Activated CD4-positive, alpha-beta T cell treated with anti-CD3 and anti-CD28 coated beads, Interleukin-2, amount 10 ng/mL, durations not matched to agents 24 days and 14 days (primary cell): ENCODE measurements at regions of chr11 and their contacts with region 1.

Region 1: GRCh38 chr11:46361283-46362155 is 14.3 kb downstream of the DGKZ start:
- DNase-seq: peak; percentile 89
- H3K4me3 Mint-ChIP-seq: peak overlapping the region; percentile 88
- H3K27ac Mint-ChIP-seq: peak overlapping the region; percentile 80
- H3K4me1 Mint-ChIP-seq: peaks cover 27% of the 10 kb centered on the region
- H3K27me3 Mint-ChIP-seq: no peaks in the 10 kb centered on the region

Region 2: DNA sequence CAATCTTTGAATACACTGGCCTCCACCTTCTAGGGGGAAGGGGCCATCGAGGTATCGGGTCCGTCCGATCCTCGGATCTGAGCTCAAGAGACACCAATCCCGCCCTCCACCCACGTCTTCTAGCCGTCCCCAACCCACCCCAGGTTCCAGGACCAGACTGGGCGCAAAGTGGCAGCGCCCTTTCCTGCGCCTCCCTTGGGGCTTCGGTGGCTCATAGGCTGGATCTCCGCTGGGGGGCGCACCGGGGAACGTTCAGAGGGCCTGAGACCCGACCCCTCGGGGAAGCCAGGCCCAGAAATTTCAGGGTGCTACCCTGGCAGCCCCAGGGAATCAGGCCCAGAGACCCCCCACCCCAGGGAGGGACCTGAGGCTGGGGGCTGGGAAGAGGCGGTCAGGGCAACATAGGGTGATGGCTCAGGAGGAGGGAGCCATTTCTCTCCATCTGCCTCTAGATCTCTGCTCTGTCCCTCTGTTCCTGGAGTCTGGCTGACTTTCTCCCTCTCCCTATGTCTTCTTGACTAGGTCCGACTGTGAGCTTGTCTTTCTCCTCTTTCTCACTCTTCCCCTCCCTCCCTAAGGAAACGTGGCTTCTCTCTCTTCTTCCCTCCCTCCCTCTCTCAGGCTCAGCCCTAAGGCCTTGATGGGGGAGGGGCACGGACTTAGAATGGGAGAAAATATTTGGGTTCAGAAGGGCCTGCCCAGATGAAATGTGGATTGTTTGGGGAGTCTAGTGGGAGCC is 83.0 kb before region 1 on chr11:
- intact Hi-C with region 1: no loop called
- DNase-seq: peak; percentile 68
- H3K4me3 Mint-ChIP-seq: no peak overlapping the region
- H3K27ac Mint-ChIP-seq: no peak overlapping the region
- H3K4me1 Mint-ChIP-seq: no peaks in the 10 kb centered on the region
- H3K27me3 Mint-ChIP-seq: peaks cover 58% of the 10 kb centered on the region

Region 3: GRCh38 chr11:46346886-46347636 is 14.5 kb before region 1 on chr11 and contains the start of gene DGKZ:
- intact Hi-C with region 1: loop called (anchors 1 kb)
- DNase-seq: peak; percentile 98
- H3K4me3 Mint-ChIP-seq: peak within 1 kb of the TSS; percentile 88
- H3K27ac Mint-ChIP-seq: peak within 1 kb of the TSS; percentile 91
- H3K4me1 Mint-ChIP-seq: peaks cover 73% of the 10 kb centered on the region
- H3K27me3 Mint-ChIP-seq: no peaks in the 10 kb centered on the region
- total RNA-seq, gene DGKZ: 87.4 and 94.7 TPM in 2 replicates

Region 4: DNA sequence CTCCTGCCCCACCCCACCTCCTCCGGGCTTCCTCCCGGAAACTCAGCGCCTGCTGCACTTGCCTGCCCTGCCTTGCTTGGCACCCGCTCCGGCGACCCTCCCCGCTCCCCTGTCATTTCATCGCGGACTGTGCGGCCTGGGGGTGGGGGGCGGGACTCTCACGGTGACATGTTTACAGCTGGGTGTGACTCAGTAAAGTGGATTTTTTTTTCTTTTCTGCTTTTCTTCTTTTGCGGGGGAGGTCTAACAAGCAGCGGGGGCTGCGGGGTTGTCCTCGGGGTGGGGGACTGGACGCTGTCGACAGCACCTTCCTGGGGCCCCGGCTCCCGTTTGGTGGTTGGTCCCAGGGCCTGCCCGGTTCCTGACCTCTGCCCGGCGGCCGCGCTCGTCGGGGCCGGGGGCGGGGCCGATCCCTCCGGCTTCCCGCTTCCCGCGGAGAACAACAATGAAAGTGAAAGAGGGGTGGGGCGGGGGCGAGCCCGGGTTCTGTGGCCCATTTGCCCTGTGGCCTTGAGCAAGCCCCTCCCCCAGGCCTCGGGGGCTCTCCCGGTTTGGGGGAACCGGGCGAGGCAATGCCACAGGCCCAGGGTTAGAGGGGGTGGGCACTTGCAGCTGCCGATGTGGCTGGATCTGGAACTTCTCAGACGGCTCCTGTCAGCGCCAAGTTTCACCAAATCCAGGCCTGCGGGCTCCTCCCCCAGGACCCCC is 19.0 kb after region 1 on chr11:
- intact Hi-C with region 1: loop called (anchors 2 kb)
- DNase-seq: peak; percentile 91
- H3K4me3 Mint-ChIP-seq: peak overlapping the region; percentile 79
- H3K27ac Mint-ChIP-seq: peak overlapping the region; percentile 80
- H3K4me1 Mint-ChIP-seq: peaks cover 9% of the 10 kb centered on the region
- H3K27me3 Mint-ChIP-seq: peaks cover 10% of the 10 kb centered on the region